ENCODE measurements at regions of chr1 and their contacts with region 1.

Region 1: GRCh38 chr1:12477936-12478611 is 139.9 kb downstream of the DHRS3 start:
- DNase-seq: peak; percentile 98
- ATAC-seq: peak; percentile 72
- H3K4me3 ChIP-seq: peak overlapping the region; percentile 37; the same call in 1 of the 2 replicates
- H3K27ac ChIP-seq: peak overlapping the region; percentile 96
- H3K4me1 ChIP-seq: peaks cover 74% of the 10 kb centered on the region
- H3K27me3 ChIP-seq: no peaks in the 10 kb centered on the region
- CTCF ChIP-seq: no peak

Region 2: GRCh38 chr1:12314333-12314903 is 163.7 kb before region 1 on chr1:
- CTCF ChIA-PET with region 1: no interaction called
- POLR2A ChIA-PET with region 1: no interaction called
- intact Hi-C with region 1: loop called (anchors 10 kb)
- DNase-seq: peak; percentile 44
- ATAC-seq: peak; percentile 67
- H3K4me3 ChIP-seq: no peak overlapping the region
- H3K27ac ChIP-seq: no peak overlapping the region
- H3K4me1 ChIP-seq: no peaks in the 10 kb centered on the region
- H3K27me3 ChIP-seq: no peaks in the 10 kb centered on the region
- CTCF ChIP-seq: peak; percentile 73

Region 3: DNA sequence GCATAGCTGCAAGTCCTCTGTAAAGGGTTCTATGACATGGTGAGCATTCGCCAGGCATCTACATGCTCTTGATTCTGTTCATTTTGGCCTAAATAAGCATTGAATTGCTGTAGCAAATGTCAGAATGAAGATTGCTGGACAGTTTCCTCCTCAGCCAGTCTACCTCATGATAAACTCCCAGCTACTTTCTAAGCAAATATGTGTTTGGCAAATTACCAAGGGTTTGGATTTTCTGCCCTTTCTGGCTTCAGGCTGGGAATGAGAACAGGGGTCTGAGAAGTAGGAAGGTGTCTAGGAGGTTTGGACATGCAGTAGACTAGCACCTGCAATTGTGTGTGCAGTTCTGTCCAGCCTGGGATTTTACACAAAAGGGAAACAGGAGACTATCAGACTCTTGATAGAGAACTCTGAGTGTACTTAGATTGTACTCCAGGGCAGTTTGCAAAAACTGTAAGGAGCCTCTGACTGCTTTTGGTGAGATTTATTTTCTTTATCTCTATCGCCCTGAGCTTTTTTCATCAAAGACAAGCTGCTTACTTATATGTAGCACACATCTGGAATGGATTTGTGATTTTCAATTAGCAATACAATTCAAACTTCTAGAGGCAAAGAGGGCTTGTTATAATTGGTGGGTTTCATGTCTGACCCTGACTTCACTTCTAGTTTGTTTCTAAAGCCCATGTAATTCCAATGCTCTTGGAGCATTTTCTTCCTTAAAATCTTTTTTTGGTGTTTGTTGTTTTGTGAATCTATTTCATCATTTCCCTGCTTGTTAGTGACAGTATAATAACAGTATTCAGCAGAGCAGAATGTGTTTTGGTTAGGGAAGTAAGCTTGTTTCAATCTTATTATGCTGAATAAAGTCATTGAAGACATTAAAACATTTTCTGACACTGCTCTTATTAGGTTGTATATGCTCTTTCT is 97.5 kb before region 1 on chr1:
- CTCF ChIA-PET with region 1: no interaction called
- POLR2A ChIA-PET with region 1: interaction called, 5 read pairs
- intact Hi-C with region 1: loop called (anchors 1 kb)
- DNase-seq: peak; percentile 61
- ATAC-seq: peak; percentile 27
- H3K4me3 ChIP-seq: peak overlapping the region; percentile 39
- H3K27ac ChIP-seq: peak overlapping the region; percentile 99
- H3K4me1 ChIP-seq: peaks cover 54% of the 10 kb centered on the region
- H3K27me3 ChIP-seq: no peaks in the 10 kb centered on the region
- CTCF ChIP-seq: no peak

Region 4: DNA sequence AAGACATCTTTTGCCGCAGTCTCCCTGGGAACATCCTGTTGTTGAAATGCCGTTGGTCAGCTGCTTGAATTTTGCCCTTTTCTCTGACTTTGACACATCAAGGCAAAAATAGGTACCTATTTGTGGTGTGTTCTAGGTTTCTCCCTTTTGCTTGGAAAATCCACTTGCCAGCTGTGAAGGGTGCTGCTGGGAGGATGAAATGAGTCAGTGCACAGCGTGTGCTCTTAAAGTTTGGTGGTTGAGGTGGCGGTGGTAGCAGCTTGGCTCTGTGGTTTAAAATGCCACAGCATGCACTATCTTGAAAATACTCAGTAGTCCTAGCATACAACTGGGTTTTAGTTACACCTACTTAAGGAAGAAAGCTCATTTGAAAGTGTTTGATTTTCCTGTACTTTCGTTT is 43.9 kb before region 1 on chr1:
- CTCF ChIA-PET with region 1: no interaction called
- POLR2A ChIA-PET with region 1: no interaction called
- intact Hi-C with region 1: loop called (anchors 2 kb)
- DNase-seq: peak; percentile 76
- ATAC-seq: peak; percentile 84
- H3K4me3 ChIP-seq: no peak overlapping the region
- H3K27ac ChIP-seq: peak overlapping the region; percentile 39
- H3K4me1 ChIP-seq: peaks cover 59% of the 10 kb centered on the region
- H3K27me3 ChIP-seq: no peaks in the 10 kb centered on the region
- CTCF ChIP-seq: no peak

Region 5: GRCh38 chr1:12501661-12502060 is 23.6 kb after region 1 on chr1:
- CTCF ChIA-PET with region 1: no interaction called
- POLR2A ChIA-PET with region 1: interaction called, 3 read pairs
- intact Hi-C with region 1: loop called (anchors 2 kb)
- DNase-seq: peak; percentile 83
- ATAC-seq: peak; percentile 98
- H3K4me3 ChIP-seq: no peak overlapping the region
- H3K27ac ChIP-seq: peak overlapping the region; percentile 56
- H3K4me1 ChIP-seq: peaks cover 20% of the 10 kb centered on the region
- H3K27me3 ChIP-seq: no peaks in the 10 kb centered on the region
- CTCF ChIP-seq: no peak

Region 6: DNA sequence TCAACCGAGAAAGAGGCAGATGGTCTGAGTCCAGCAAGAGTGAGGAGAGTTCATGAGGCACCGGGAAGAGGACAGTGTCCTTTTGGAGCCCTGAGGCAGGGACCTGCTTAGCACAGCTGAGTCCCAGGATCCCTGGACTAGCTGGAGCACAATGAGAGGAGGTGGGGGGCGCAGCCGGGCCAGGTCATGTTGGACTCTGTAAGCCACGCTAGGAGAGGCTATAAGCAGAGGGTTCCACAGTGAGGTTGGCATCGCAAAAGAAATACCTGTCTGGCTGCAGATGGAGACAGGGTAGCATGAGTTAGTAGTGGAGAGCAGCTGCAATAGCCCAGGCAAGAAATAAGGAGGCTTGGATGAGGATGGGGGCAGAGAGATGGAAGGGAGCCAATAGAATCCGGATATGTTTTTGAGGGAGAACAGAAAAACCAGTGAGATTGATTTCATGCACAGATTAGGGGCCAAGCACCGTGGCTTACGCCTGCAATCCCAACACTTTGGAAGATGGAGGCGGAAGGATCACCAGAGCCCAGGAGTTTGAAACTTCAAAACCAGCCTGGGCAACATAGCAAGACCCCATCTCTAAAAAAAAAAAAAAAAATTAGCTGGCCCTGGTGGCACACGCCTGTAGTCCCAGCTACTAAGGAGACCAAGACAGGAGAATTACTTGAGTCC is 41.8 kb after region 1 on chr1:
- CTCF ChIA-PET with region 1: no interaction called
- POLR2A ChIA-PET with region 1: no interaction called
- intact Hi-C with region 1: no loop called
- DNase-seq: no peak
- ATAC-seq: no peak
- H3K4me3 ChIP-seq: no peak overlapping the region
- H3K27ac ChIP-seq: no peak overlapping the region
- H3K4me1 ChIP-seq: peaks cover 9% of the 10 kb centered on the region
- H3K27me3 ChIP-seq: no peaks in the 10 kb centered on the region
- CTCF ChIP-seq: no peak

Region 7: DNA sequence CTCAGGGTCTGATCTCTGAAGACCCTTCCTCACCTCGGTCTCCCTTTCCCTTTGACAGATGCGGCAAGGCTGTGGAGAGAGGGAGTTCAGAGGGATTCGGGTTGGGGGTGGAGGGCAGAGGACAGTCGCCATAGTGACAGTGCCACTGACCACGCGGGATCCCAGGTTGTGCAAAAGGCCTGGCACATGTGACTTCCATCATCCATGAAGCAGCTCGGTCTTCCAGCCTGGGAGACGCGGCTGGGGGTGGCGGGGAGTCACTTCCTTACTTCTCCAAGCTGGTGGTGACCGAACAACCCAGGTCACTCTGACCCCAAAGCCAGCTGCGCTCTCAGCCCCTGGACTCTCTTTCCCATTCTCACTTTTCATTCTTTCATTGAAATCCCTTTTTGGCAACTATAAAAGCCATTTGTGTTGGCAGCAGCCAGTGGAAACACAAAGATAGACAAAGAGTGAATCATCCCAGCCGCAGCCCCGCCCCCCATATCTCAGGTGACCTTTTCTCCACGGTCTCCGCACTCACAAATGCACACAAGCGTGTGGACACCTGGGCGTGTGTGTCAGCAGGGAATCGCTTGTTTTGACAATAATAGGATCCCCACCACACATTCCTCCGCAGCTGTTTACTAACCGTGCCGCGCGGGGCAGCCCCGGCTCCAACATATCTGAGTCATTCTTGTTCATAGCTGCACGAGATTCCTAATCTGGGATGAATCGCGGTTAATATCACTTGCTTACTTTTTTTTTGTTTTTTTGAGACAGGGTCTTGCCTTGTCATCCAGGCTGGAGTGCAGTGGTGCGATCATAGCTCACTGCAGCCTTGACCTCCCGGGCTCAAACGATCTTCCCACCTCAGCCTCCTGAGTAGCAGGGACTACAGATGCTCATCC is 71.6 kb after region 1 on chr1:
- CTCF ChIA-PET with region 1: no interaction called
- POLR2A ChIA-PET with region 1: no interaction called
- intact Hi-C with region 1: loop called (anchors 1 kb)
- DNase-seq: peak; percentile 98
- ATAC-seq: peak; percentile 96
- H3K4me3 ChIP-seq: peak overlapping the region; percentile 25; the same call in 1 of the 2 replicates
- H3K27ac ChIP-seq: peak overlapping the region; percentile 81
- H3K4me1 ChIP-seq: peaks cover 18% of the 10 kb centered on the region
- H3K27me3 ChIP-seq: no peaks in the 10 kb centered on the region
- CTCF ChIP-seq: no peak

Region 8: GRCh38 chr1:12690156-12690555 is 212.1 kb after region 1 on chr1:
- CTCF ChIA-PET with region 1: no interaction called
- POLR2A ChIA-PET with region 1: no interaction called
- intact Hi-C with region 1: no loop called
- DNase-seq: no peak
- ATAC-seq: no peak
- H3K4me3 ChIP-seq: no peak overlapping the region
- H3K27ac ChIP-seq: no peak overlapping the region
- H3K4me1 ChIP-seq: no peaks in the 10 kb centered on the region
- H3K27me3 ChIP-seq: peaks cover 65% of the 10 kb centered on the region
- CTCF ChIP-seq: no peak

Measured in PC-3 (cell line).